K562 (cell line): ENCODE measurements at regions of chr1 and their contacts with region 1.

Region 1: DNA sequence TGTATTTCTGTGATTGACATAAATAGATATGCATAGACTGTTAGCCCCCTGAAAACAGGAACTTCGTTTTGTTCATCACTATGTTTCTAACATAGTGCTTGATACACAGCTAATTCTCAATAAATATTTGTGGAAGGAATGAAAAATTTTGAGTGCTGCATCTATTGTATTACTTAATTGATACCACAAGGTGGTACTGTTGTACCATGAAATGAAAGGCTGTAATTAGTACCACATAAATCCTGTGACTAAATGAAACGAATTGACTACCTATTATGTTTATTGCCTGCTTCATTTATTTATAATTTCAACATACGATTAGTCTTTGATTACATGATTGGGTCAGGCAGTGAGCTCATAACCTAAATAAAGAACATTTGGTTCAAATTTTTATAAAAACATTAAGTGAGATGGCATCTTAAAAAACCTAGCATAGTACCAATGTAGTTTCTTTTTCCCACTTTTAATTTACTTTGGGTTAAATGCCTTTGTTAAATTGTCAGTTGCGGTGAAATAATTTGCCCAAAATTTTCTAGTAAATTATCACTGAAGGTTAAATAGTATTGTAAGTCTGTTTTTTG is 15.0 kb upstream of the TGFB2 start:
- DNase-seq: peak; percentile 31 to 44 (median 40)
- ATAC-seq: peak; percentile 81
- H3K4me3 ChIP-seq: no peak overlapping the region
- H3K27ac ChIP-seq: no peak overlapping the region
- H3K4me1 ChIP-seq: no peaks in the 10 kb centered on the region
- H3K27me3 ChIP-seq: no peaks in the 10 kb centered on the region
- CTCF ChIP-seq: peak; percentile 26 to 80 (median 46); a peak in 4 of 6 replicates
- EP300 ChIP-seq: no peak
- POLR2A ChIP-seq: no peak
- RAD21 ChIP-seq: peak; percentile 90 to 93

Region 2: DNA sequence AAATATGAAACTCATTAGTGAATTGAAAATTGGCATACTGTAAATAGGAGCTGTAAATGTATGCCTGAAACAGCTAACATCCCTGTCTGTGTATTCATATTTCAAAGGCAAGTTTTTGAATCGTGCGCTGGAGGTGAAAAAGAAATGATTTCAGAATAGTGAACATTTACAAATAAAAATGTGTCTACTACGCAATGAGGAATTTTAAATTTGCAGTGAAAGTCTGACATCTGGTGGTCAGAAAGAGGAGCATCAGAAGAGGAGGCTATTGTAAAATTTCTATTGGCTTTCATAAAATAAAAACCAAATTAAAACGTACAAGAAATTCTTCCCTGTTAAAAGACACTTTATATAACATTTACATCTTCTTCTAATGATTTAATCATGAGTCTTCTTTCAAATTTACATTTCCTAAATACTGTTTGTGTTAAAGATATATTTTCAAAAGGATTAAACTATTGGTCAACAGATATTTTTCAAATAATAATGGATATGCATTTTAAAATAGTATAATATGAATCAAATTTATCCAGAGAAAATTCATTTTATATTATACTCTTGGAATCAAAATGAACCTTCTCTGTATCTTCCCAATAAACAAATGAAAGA is 158.7 kb before region 1 on chr1:
- CTCF ChIA-PET with region 1: no interaction called
- POLR2A ChIA-PET with region 1: no interaction called
- in situ Hi-C with region 1: no loop called
- intact Hi-C with region 1: no loop called
- DNase-seq: peak in 1 of 4 experiments; percentile 42
- ATAC-seq: no peak
- H3K4me3 ChIP-seq: no peak overlapping the region
- H3K27ac ChIP-seq: no peak overlapping the region
- H3K4me1 ChIP-seq: no peaks in the 10 kb centered on the region
- H3K27me3 ChIP-seq: no peaks in the 10 kb centered on the region
- CTCF ChIP-seq: peak in 2 of 3 experiments; percentile 39 to 64; a peak in 4 of 6 replicates
- EP300 ChIP-seq: no peak
- POLR2A ChIP-seq: no peak
- RAD21 ChIP-seq: peak; percentile 66 to 83

Region 3: DNA sequence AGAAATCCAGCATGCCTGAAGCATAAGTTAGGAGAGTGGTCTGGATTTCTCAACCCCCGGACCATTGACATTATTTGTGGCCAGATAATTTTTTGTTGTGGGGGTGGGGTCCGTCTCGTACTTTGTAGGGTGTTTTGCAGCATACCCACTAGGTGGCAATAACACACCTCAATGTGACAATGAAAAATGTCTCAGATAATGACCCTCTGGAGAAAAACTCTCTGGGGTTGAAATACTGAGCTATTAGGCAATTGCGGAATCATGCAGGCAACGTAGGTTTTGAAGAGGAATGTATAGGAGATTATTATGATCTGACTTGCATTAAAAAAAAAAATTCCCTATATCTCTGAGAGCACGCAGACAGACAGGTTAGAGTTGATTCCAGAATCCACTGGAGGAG is 70.3 kb before region 1 on chr1:
- CTCF ChIA-PET with region 1: no interaction called
- POLR2A ChIA-PET with region 1: no interaction called
- in situ Hi-C with region 1: no loop called
- intact Hi-C with region 1: loop called (anchors 5 kb)
- DNase-seq: peak; percentile 33 to 69 (median 51)
- ATAC-seq: peak; percentile 96
- H3K4me3 ChIP-seq: no peak overlapping the region
- H3K27ac ChIP-seq: no peak overlapping the region
- H3K4me1 ChIP-seq: no peaks in the 10 kb centered on the region
- H3K27me3 ChIP-seq: peaks cover 0 to 3% of the 10 kb centered on the region in 2 experiments; a peak in 1 of 5 replicates
- CTCF ChIP-seq: peak; percentile 62 to 72 (median 68)
- EP300 ChIP-seq: no peak
- POLR2A ChIP-seq: no peak
- RAD21 ChIP-seq: peak; percentile 15 to 71; a peak in 3 of 4 replicates

Region 4: GRCh38 chr1:218401998-218402785 is 72.1 kb after region 1 on chr1:
- CTCF ChIA-PET with region 1: no interaction called
- POLR2A ChIA-PET with region 1: no interaction called
- in situ Hi-C with region 1: no loop called
- intact Hi-C with region 1: no loop called
- DNase-seq: no peak
- ATAC-seq: no peak; the same call in 2 of the 3 replicates
- H3K4me3 ChIP-seq: no peak overlapping the region
- H3K27ac ChIP-seq: no peak overlapping the region
- H3K4me1 ChIP-seq: no peaks in the 10 kb centered on the region
- H3K27me3 ChIP-seq: peaks cover 27 to 30% of the 10 kb centered on the region in 2 experiments; a peak in 4 of 5 replicates
- CTCF ChIP-seq: no peak
- EP300 ChIP-seq: no peak
- POLR2A ChIP-seq: no peak
- RAD21 ChIP-seq: no peak

Region 5: GRCh38 chr1:218521375-218522169 is 191.4 kb after region 1 on chr1:
- CTCF ChIA-PET with region 1: interaction called, 11 read pairs
- POLR2A ChIA-PET with region 1: no interaction called
- in situ Hi-C with region 1: no loop called
- intact Hi-C with region 1: no loop called
- DNase-seq: peak; percentile 57 to 73 (median 67)
- ATAC-seq: peak; percentile 91
- H3K4me3 ChIP-seq: no peak overlapping the region
- H3K27ac ChIP-seq: no peak overlapping the region
- H3K4me1 ChIP-seq: no peaks in the 10 kb centered on the region
- H3K27me3 ChIP-seq: peaks cover 0 to 3% of the 10 kb centered on the region in 2 experiments; a peak in 1 of 5 replicates
- CTCF ChIP-seq: peak; percentile 65 to 83 (median 72)
- EP300 ChIP-seq: no peak
- POLR2A ChIP-seq: no peak
- RAD21 ChIP-seq: peak in 1 of 2 experiments; percentile 75; a peak in 3 of 4 replicates

Region 6: DNA sequence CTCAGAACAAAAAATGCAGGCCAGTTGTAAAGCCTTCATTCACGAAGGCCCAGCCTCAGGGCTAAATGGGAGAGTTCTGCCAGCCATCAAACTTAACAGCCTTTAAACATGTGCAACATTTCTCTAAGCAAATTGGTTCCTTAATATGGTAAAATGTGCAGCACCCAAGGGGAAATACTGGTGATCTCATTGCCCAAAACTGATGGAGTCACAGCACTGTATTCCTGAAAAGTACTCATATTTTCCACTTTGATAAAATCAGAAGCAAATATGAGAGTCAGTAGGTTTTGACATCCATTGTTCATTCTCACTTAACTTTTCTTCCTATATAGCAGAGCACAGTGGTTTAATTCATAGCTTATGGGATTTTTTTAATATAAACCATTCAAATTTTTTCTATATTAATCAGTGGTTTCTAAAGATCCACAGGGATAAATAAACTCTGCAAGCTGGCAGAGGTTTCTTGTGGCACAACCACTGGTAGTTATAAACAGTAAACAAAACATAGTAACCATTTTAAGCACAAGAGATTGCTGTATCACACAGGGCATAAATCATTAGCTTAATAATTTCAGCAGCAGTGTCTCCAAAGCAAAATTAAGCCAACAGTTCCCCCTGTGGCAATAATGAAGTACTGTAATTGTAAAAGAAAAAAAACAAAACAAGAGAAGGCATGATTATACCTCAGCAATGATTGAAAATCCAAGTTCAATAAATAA is 736.7 kb after region 1 on chr1:
- CTCF ChIA-PET with region 1: no interaction called
- POLR2A ChIA-PET with region 1: no interaction called
- in situ Hi-C with region 1: no loop called
- intact Hi-C with region 1: loop called (anchors 10 kb)
- DNase-seq: no peak
- ATAC-seq: peak; percentile 74
- H3K4me3 ChIP-seq: no peak overlapping the region
- H3K27ac ChIP-seq: no peak overlapping the region
- H3K4me1 ChIP-seq: no peaks in the 10 kb centered on the region
- H3K27me3 ChIP-seq: no peaks in the 10 kb centered on the region
- CTCF ChIP-seq: peak; percentile 24 to 38 (median 27); a peak in 3 of 6 replicates
- EP300 ChIP-seq: no peak
- POLR2A ChIP-seq: no peak
- RAD21 ChIP-seq: peak; percentile 41 to 53; a peak in 3 of 4 replicates

Region 7: DNA sequence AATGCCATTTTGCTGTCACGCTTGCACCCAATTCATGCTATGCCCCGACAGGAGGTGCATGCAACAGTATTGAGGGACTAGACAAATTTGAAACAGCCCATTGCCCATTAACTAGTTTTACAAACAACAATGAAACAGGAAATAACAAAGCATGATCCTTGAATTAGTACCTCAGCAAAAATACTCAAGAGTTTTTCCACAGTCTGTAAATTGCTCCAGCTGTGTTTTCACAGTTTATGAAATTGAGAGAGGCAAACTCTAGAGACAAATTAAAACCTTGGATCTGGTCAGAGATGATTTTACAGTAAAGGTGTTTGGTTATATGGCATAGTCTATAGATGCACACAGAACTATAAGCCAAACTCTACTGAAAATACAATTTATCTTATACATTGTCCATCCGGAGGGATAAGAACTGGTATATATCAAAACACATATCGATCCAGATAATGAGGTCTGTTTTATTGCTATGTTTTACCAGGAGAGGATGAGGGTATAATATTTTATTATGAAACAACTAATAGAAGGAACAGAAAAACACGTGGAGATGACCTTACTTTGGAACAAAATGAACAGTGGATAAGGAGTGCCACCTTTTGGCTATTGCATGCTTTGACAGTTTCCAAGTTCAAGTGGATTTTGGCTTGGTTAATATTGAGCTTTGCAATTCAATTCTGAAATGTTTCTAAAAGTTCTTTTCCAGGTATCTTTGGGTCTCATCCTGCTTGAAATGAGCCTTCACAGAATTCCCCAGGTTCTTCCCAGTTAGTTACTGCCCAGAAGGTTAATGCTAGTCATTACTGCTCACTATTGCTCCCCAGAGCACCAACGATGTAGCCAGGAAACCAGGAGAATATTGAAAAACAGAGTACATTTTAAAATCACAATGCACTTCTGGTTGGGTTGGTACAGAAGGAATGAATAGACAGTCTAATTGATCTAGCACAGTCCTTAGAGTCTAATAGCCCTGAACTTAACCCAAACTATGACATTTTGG is 1237.1 kb after region 1 on chr1:
- CTCF ChIA-PET with region 1: no interaction called
- POLR2A ChIA-PET with region 1: no interaction called
- in situ Hi-C with region 1: no loop called
- intact Hi-C with region 1: loop called (anchors 10 kb)
- DNase-seq: peak in 1 of 4 experiments; percentile 47
- ATAC-seq: peak; percentile 61; the same call in 2 of the 3 replicates
- H3K4me3 ChIP-seq: no peak overlapping the region
- H3K27ac ChIP-seq: no peak overlapping the region
- H3K4me1 ChIP-seq: peaks cover 0 to 3% of the 10 kb centered on the region in 2 experiments; a peak in 1 of 5 replicates
- H3K27me3 ChIP-seq: no peaks in the 10 kb centered on the region
- CTCF ChIP-seq: peak in 2 of 3 experiments; percentile 54 to 64; a peak in 4 of 6 replicates
- EP300 ChIP-seq: no peak
- POLR2A ChIP-seq: no peak
- RAD21 ChIP-seq: peak; percentile 45 to 71

Region 8: GRCh38 chr1:219812491-219813203 is 1482.5 kb after region 1 on chr1:
- CTCF ChIA-PET with region 1: interaction called, 16 read pairs
- POLR2A ChIA-PET with region 1: no interaction called
- in situ Hi-C with region 1: loop called (anchors 25 kb)
- intact Hi-C with region 1: loop called (anchors 10 kb)
- DNase-seq: peak; percentile 72 to 81 (median 76)
- ATAC-seq: peak; percentile 97
- H3K4me3 ChIP-seq: no peak overlapping the region
- H3K27ac ChIP-seq: no peak overlapping the region
- H3K4me1 ChIP-seq: no peaks in the 10 kb centered on the region
- H3K27me3 ChIP-seq: peaks cover 15 to 33% of the 10 kb centered on the region in 2 experiments; a peak in 3 of 5 replicates
- CTCF ChIP-seq: peak; percentile 89 to 97 (median 96)
- EP300 ChIP-seq: no peak
- POLR2A ChIP-seq: no peak
- RAD21 ChIP-seq: peak; percentile 94 to 97